ENCODE measurements at regions of chr12 and their contacts with region 1.

Region 1: GRCh38 chr12:14845350-14845750 is 2.0 kb upstream of the ART4 start:
- DNase-seq: peak in 1 of 2 donors; percentile 30
- H3K4me3 ChIP-seq: no peak overlapping the region
- H3K27ac ChIP-seq: peak overlapping the region; percentile 35 to 49
- H3K4me1 ChIP-seq: peaks cover 0 to 12% of the 10 kb centered on the region in 2 donors
- H3K27me3 ChIP-seq: no peaks in the 10 kb centered on the region
- CTCF ChIP-seq: peak; percentile 79 to 90 (median 84)
- POLR2A ChIP-seq: no peak

Region 2: GRCh38 chr12:14995583-14996425 is 150.5 kb after region 1 on chr12:
- intact Hi-C with region 1: loop called (anchors 2 kb)
- DNase-seq: no peak
- H3K4me3 ChIP-seq: no peak overlapping the region
- H3K27ac ChIP-seq: no peak overlapping the region
- H3K4me1 ChIP-seq: no peaks in the 10 kb centered on the region
- H3K27me3 ChIP-seq: no peaks in the 10 kb centered on the region
- CTCF ChIP-seq: peak; percentile 30 to 76 (median 71)
- POLR2A ChIP-seq: no peak

Region 3: GRCh38 chr12:15001733-15002382 is 156.5 kb after region 1 on chr12:
- intact Hi-C with region 1: loop called (anchors 2 kb)
- DNase-seq: peak; percentile 37 to 54
- H3K4me3 ChIP-seq: peak overlapping the region in 2 of 3 donors; percentile 17 to 48
- H3K27ac ChIP-seq: peak overlapping the region; percentile 26 to 60
- H3K4me1 ChIP-seq: no peaks in the 10 kb centered on the region
- H3K27me3 ChIP-seq: no peaks in the 10 kb centered on the region
- CTCF ChIP-seq: no peak
- POLR2A ChIP-seq: no peak